Mammary epithelial cell (primary cell): ENCODE measurements at regions of chr21 and their contacts with region 1.

Region 1: DNA sequence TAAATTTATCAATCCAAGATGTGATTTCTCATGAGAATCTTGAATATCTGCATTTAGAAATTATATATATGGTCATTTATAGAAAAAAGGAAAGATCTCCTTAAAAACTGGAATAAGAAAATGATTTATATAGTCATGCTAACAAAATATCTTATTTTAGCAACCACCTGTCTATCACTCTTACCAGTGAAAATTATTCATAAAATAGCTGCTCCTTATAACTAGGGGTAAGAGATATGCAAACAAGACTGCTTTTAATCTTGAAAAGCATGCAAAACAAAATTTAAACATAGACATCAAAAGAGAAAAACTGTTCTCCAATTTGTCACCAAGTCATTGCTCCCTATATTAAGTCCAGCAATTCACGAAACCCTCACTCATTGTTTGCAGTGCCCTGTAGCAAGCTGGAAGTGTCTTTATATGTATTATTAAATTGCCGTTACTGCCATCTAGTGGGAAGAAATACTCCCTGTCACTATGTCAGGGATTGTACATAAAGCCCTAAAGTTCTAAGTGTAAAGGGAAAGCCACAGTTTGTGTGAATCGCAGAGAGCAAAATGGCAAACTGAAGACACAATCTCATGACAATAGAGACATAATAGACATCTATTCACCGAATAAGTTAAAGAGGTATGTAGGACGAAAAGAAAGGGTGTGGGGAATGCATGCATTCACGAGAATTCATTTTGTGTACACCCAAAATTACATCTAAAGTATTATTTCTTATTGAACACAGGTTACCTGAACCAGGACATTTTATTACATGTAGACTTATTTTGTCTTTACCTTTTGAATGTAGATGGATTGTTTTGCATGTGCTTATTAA is 600.5 kb downstream of the USP25 start:
- DNase-seq: peak; percentile 56
- H3K4me3 ChIP-seq: no peak overlapping the region
- H3K27ac ChIP-seq: no peak overlapping the region
- H3K4me1 ChIP-seq: no peaks in the 10 kb centered on the region
- H3K27me3 ChIP-seq: no peaks in the 10 kb centered on the region
- CTCF ChIP-seq: peak; percentile 69 to 73

Region 2: DNA sequence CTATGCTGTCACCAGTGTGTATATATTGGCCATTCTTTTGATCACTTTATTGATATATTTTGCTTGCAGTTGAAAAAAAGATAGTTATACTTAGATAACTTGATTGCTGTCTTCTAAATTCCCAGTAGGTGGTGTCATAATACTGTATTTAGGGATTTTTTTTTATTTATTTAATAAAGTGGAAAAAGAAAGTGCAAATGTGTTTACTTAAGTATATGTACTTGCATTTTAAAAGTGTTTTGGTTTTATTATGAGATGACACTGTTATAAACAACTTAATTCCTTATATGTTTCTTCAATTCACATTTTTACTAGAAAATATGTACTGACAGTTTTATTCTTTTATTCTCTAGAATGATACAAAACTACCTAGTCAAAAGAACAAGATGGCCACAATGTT is 435.7 kb before region 1 on chr21:
- CTCF ChIA-PET with region 1: no interaction called
- dilution Hi-C with region 1: no loop called
- in situ Hi-C with region 1: no loop called
- intact Hi-C with region 1: loop called (anchors 1 kb)
- DNase-seq: no peak
- H3K4me3 ChIP-seq: no peak overlapping the region
- H3K27ac ChIP-seq: no peak overlapping the region
- H3K4me1 ChIP-seq: no peaks in the 10 kb centered on the region
- H3K27me3 ChIP-seq: no peaks in the 10 kb centered on the region
- CTCF ChIP-seq: peak; percentile 37 to 45

Region 3: DNA sequence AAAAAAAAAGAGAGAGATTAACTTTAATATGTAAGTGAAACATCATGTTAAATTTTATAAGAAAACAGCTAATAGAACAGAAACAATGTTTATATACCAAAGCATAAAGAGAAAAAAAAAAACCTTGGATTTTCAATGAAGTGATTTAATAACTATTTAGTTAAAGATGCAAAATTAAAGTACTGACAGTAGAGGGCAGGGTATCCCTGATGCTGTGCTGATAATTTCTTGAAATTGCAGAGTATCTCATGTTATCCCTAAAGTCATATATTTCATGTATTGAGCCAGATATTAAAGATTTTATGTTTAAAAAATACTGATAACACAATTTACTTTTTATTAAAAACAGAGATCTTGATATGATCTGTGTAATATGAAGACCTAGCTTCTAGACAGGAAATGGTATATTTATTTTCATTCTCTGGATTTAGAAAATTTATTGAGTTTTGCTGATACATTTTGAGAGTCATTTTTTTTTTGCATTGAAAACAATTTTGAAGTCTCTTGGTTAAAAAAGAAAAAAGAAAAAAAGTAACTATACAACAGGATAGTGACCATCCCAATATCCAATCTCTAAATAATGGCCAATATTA is 327.3 kb before region 1 on chr21:
- CTCF ChIA-PET with region 1: no interaction called
- dilution Hi-C with region 1: no loop called
- in situ Hi-C with region 1: no loop called
- intact Hi-C with region 1: loop called (anchors 2 kb)
- DNase-seq: no peak
- H3K4me3 ChIP-seq: no peak overlapping the region
- H3K27ac ChIP-seq: no peak overlapping the region
- H3K4me1 ChIP-seq: no peaks in the 10 kb centered on the region
- H3K27me3 ChIP-seq: no peaks in the 10 kb centered on the region
- CTCF ChIP-seq: peak; percentile 17 to 46

Region 4: DNA sequence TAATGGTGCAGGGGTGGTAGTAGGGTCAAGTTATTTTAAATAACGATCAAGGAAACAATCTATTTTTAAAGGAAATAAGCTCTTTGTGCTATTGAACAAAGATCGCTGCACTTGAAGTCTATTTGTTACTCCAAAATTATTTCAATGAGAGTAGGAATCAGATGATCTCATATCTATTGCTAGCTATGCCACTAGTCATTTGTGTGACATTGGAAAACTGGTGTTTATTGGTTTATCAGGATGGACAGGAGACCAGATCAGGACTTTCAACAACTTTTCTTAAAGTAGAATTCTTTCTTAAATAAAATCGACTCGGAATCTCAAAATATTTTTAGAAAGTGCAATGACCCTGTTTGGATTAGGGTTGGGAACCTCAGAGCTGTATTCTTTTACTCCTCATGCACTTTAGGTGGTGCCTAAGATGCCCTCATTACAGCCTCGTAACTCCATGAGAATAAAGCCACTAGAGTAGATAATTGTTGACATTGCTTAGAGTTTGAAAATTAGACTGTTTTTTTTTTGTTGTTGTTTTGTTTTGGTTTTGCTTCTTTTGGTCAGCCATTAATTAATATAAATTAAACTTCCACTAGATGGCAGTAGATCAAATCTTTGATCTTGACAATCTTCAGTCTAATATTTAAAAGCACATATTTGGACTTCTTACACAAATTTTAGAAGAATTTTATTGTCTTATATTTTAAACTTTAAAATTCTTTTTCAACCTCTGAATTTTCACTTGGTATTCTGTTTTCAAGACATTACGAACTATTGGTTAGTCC is 248.1 kb before region 1 on chr21:
- CTCF ChIA-PET with region 1: no interaction called
- dilution Hi-C with region 1: no loop called
- in situ Hi-C with region 1: loop called (anchors 10 kb)
- intact Hi-C with region 1: loop called (anchors 1 kb)
- DNase-seq: no peak
- H3K4me3 ChIP-seq: no peak overlapping the region
- H3K27ac ChIP-seq: no peak overlapping the region
- H3K4me1 ChIP-seq: no peaks in the 10 kb centered on the region
- H3K27me3 ChIP-seq: no peaks in the 10 kb centered on the region
- CTCF ChIP-seq: peak; percentile 13 to 33

Region 5: GRCh38 chr21:16402752-16403151 is 72.5 kb after region 1 on chr21:
- CTCF ChIA-PET with region 1: no interaction called
- dilution Hi-C with region 1: no loop called
- in situ Hi-C with region 1: no loop called
- intact Hi-C with region 1: no loop called
- DNase-seq: no peak
- H3K4me3 ChIP-seq: no peak overlapping the region
- H3K27ac ChIP-seq: no peak overlapping the region
- H3K4me1 ChIP-seq: no peaks in the 10 kb centered on the region
- H3K27me3 ChIP-seq: no peaks in the 10 kb centered on the region
- CTCF ChIP-seq: no peak